K562 (cell line): ENCODE measurements at regions of chr4 and their contacts with region 1.

Region 1: GRCh38 chr4:163191999-163192398 is 25.3 kb upstream of the NAF1 start:
- DNase-seq: peak; percentile 35 to 71 (median 43)
- ATAC-seq: peak; percentile 70
- H3K4me3 ChIP-seq: no peak overlapping the region
- H3K27ac ChIP-seq: no peak overlapping the region
- H3K4me1 ChIP-seq: peaks cover 4 to 27% of the 10 kb centered on the region in 2 experiments; a peak in 4 of 5 replicates
- H3K27me3 ChIP-seq: no peaks in the 10 kb centered on the region
- CTCF ChIP-seq: peak; percentile 71 to 85 (median 78)
- EP300 ChIP-seq: no peak
- POLR2A ChIP-seq: no peak
- RAD21 ChIP-seq: peak; percentile 76

Region 2: GRCh38 chr4:163048447-163048846 is 143.6 kb before region 1 on chr4:
- CTCF ChIA-PET with region 1: no interaction called
- POLR2A ChIA-PET with region 1: no interaction called
- in situ Hi-C with region 1: no loop called
- intact Hi-C with region 1: loop called (anchors 1 kb)
- DNase-seq: peak; percentile 25 to 52 (median 41)
- ATAC-seq: peak; percentile 86
- H3K4me3 ChIP-seq: no peak overlapping the region
- H3K27ac ChIP-seq: no peak overlapping the region
- H3K4me1 ChIP-seq: no peaks in the 10 kb centered on the region
- H3K27me3 ChIP-seq: no peaks in the 10 kb centered on the region
- CTCF ChIP-seq: peak; percentile 57 to 66 (median 64)
- EP300 ChIP-seq: no peak
- POLR2A ChIP-seq: no peak
- RAD21 ChIP-seq: peak; percentile 53 to 69

Region 3: GRCh38 chr4:163166041-163166579 is 25.9 kb before region 1 on chr4:
- CTCF ChIA-PET with region 1: no interaction called
- POLR2A ChIA-PET with region 1: interaction called, 4 read pairs
- in situ Hi-C with region 1: no loop called
- intact Hi-C with region 1: loop called (anchors 2 kb)
- DNase-seq: peak; percentile 49 to 71 (median 56)
- ATAC-seq: peak; percentile 84
- H3K4me3 ChIP-seq: peak overlapping the region; percentile 89
- H3K27ac ChIP-seq: peak overlapping the region; percentile 91
- H3K4me1 ChIP-seq: peaks cover 7% of the 10 kb centered on the region in 2 experiments; a peak in 3 of 5 replicates
- H3K27me3 ChIP-seq: no peaks in the 10 kb centered on the region
- CTCF ChIP-seq: no peak
- EP300 ChIP-seq: no peak
- POLR2A ChIP-seq: no peak
- RAD21 ChIP-seq: no peak

Region 4: DNA sequence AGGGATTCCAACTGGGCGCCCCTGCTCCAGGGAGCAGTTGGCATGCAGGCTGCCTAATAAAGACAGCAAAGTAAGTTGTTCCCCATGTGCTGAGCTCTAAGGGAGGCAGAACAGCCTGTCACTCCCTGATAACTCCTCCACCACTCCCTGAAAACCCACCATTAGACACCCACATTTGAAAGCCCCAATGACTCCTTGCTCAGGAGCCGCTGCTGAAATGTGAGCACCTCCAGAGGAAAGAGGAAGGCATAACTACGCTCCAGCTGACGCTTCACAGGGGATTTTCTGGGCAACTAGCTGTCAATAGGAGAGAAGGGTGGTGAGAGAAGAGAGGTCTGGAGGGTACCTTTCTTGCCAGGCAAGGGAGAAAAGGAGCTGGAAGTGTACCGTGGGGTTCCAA is 77.9 kb after region 1 on chr4:
- CTCF ChIA-PET with region 1: no interaction called
- POLR2A ChIA-PET with region 1: no interaction called
- in situ Hi-C with region 1: no loop called
- intact Hi-C with region 1: loop called (anchors 5 kb)
- DNase-seq: peak; percentile 28 to 65 (median 46)
- ATAC-seq: peak; percentile 84
- H3K4me3 ChIP-seq: no peak overlapping the region
- H3K27ac ChIP-seq: no peak overlapping the region
- H3K4me1 ChIP-seq: peaks cover 4 to 25% of the 10 kb centered on the region in 2 experiments; a peak in 4 of 5 replicates
- H3K27me3 ChIP-seq: no peaks in the 10 kb centered on the region; a peak in 1 of 5 replicates
- CTCF ChIP-seq: peak; percentile 17 to 50 (median 26); a peak in 4 of 6 replicates
- EP300 ChIP-seq: no peak
- POLR2A ChIP-seq: no peak
- RAD21 ChIP-seq: no peak

Region 5: GRCh38 chr4:163494360-163495162 is 302.6 kb after region 1 on chr4 and contains the start of gene TMA16:
- CTCF ChIA-PET with region 1: no interaction called
- POLR2A ChIA-PET with region 1: no interaction called
- in situ Hi-C with region 1: no loop called
- intact Hi-C with region 1: loop called (anchors 10 kb)
- DNase-seq: peak; percentile 78 to 95 (median 84)
- ATAC-seq: peak; percentile 93
- H3K4me3 ChIP-seq: peak within 1 kb of the TSS; percentile 97
- H3K27ac ChIP-seq: peak within 1 kb of the TSS; percentile 99
- H3K4me1 ChIP-seq: peaks cover 0 to 16% of the 10 kb centered on the region in 2 experiments; a peak in 2 of 5 replicates
- H3K27me3 ChIP-seq: no peaks in the 10 kb centered on the region
- CTCF ChIP-seq: no peak
- EP300 ChIP-seq: peak; percentile 32; the same call in 1 of the 2 replicates
- POLR2A ChIP-seq: peak; percentile 93
- RAD21 ChIP-seq: no peak
- polyA plus RNA-seq, gene TMA16: 51.4 to 67.2 TPM